ENCODE measurements at regions of chr2 and their contacts with region 1.

Region 1: DNA sequence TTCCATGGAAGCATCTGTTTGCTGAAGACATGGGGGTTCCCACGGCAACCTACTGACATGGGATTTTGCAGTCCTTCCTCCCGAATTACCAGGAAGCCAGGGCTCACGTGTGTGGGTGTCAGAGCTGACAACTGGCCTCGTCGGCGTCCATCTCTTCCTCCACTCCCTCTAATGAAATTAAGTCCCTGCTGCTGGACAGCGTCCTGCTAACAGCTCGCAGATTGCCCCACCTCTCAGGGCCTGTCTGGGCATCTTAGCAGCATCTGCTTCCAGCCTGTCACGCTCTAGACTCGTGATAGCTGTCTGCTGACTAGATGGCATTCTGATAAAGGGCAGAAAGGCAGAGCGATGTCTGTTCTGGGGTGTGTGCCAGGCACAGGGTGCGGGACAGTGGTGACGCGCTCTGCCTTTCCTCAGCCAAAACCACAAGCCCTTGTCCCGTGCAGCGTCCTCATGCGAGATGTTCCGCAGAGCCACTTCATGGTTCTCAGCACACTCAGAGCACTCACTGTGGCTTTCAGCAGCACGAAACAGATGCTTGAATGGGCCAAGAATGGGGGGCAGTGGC is 161.1 kb downstream of the ARL4C start:
- DNase-seq: peak in 8 of 10 donors; percentile 34 to 90 (median 55)

Region 2: DNA sequence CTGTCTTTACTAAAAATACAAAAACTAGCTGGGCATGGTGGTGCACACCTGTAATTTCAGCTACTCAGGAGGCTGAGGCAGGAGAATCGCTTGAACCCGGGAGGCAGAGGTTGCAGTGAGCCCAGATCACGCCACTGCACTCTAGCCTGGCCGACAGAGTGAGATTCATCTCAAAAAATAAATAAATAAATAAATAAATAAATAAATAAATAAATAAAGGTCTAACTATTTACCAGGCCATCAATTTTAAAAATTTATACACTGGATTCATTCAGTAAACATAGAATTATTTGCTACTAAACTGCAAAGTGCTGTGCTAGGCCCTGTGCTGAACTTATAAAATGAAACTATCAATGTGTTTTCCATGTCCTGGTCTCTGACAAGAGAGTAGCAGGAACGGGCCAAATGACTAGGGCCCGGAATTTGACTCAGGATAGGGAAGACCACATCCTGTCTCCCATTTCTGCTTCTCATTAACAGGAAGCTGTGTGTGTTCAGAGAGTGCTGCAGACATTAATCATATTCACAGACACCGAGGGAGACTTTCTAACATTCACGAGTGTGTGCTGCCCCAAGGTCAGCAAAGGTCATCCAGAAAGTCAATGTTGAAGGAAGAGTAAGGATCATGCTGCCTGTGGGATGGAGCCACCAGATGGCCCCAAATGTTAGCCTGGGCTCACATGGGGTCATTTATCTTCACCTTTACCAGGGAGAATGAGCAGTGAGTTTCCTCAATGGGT is 189.5 kb before region 1 on chr2:
- intact Hi-C with region 1: no loop called
- DNase-seq: no peak

Region 3: DNA sequence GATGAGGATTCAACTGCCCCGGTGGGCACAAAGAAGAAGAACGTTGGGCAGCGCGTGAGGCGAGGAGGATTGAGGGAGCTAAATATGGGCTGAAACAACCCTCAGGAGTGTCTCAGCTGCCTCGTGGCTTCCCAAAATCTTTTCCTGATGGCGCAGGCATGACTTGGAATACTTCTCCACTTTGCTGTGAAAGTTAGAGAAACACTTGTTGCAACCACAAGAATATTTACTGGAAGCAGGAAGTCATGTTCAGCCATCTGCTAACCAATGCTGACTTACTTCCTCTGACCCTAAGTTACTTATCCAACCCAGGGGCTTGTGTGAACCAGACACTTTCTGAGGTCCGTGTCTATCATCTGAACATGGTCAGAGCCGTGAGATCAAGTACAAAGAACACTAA is 12.3 kb after region 1 on chr2:
- intact Hi-C with region 1: loop called (anchors 1 kb)
- DNase-seq: peak in 1 of 10 donors; percentile 51